ENCODE measurements at regions of chr2 and their contacts with region 1.

Region 1: GRCh38 chr2:96407041-96407918 is 71.7 kb downstream of the NCAPH start:
- DNase-seq: peak; percentile 78
- ATAC-seq: peak; percentile 90
- H3K4me3 Mint-ChIP-seq: no peak overlapping the region
- H3K27ac Mint-ChIP-seq: peak overlapping the region; percentile 94
- H3K4me1 Mint-ChIP-seq: peaks cover 30% of the 10 kb centered on the region
- H3K27me3 Mint-ChIP-seq: no peaks in the 10 kb centered on the region
- CTCF ChIP-seq: peak; percentile 74

Region 2: GRCh38 chr2:95091885-95092555 is 1315.3 kb before region 1 on chr2:
- CTCF ChIA-PET with region 1: no interaction called
- POLR2A ChIA-PET with region 1: no interaction called
- intact Hi-C with region 1: no loop called
- DNase-seq: no peak
- ATAC-seq: no peak
- H3K4me3 Mint-ChIP-seq: no peak overlapping the region
- H3K27ac Mint-ChIP-seq: no peak overlapping the region
- H3K4me1 Mint-ChIP-seq: peaks cover 27% of the 10 kb centered on the region
- H3K27me3 Mint-ChIP-seq: no peaks in the 10 kb centered on the region
- CTCF ChIP-seq: no peak

Region 3: GRCh38 chr2:96396095-96396494 is 11.2 kb before region 1 on chr2:
- CTCF ChIA-PET with region 1: interaction called, 60 read pairs
- POLR2A ChIA-PET with region 1: no interaction called
- intact Hi-C with region 1: no loop called
- DNase-seq: no peak
- ATAC-seq: no peak
- H3K4me3 Mint-ChIP-seq: no peak overlapping the region
- H3K27ac Mint-ChIP-seq: no peak overlapping the region
- H3K4me1 Mint-ChIP-seq: peaks cover 4% of the 10 kb centered on the region
- H3K27me3 Mint-ChIP-seq: no peaks in the 10 kb centered on the region
- CTCF ChIP-seq: no peak

Region 4: GRCh38 chr2:96427917-96428316 is 20.6 kb after region 1 on chr2:
- CTCF ChIA-PET with region 1: interaction called, 13 read pairs
- POLR2A ChIA-PET with region 1: interaction called, 4 read pairs
- intact Hi-C with region 1: no loop called
- DNase-seq: peak; percentile 26
- ATAC-seq: peak; percentile 94
- H3K4me3 Mint-ChIP-seq: no peak overlapping the region
- H3K27ac Mint-ChIP-seq: no peak overlapping the region
- H3K4me1 Mint-ChIP-seq: peaks cover 10% of the 10 kb centered on the region
- H3K27me3 Mint-ChIP-seq: peaks cover 10% of the 10 kb centered on the region
- CTCF ChIP-seq: no peak

Region 5: GRCh38 chr2:96470636-96471035 is 63.4 kb after region 1 on chr2:
- CTCF ChIA-PET with region 1: interaction called, 14 read pairs
- POLR2A ChIA-PET with region 1: no interaction called
- intact Hi-C with region 1: no loop called
- DNase-seq: peak; percentile 72
- ATAC-seq: peak; percentile 88
- H3K4me3 Mint-ChIP-seq: no peak overlapping the region
- H3K27ac Mint-ChIP-seq: no peak overlapping the region
- H3K4me1 Mint-ChIP-seq: peaks cover 8% of the 10 kb centered on the region
- H3K27me3 Mint-ChIP-seq: peaks cover 3% of the 10 kb centered on the region
- CTCF ChIP-seq: peak; percentile 77

Region 6: GRCh38 chr2:96485751-96486651 is 78.7 kb after region 1 on chr2:
- CTCF ChIA-PET with region 1: interaction called, 10 read pairs
- POLR2A ChIA-PET with region 1: interaction called, 4 read pairs
- intact Hi-C with region 1: no loop called
- DNase-seq: peak; percentile 93
- ATAC-seq: peak; percentile 93
- H3K4me3 Mint-ChIP-seq: peak overlapping the region; percentile 86
- H3K27ac Mint-ChIP-seq: peak overlapping the region; percentile 96
- H3K4me1 Mint-ChIP-seq: peaks cover 40% of the 10 kb centered on the region
- H3K27me3 Mint-ChIP-seq: no peaks in the 10 kb centered on the region
- CTCF ChIP-seq: no peak

Region 7: DNA sequence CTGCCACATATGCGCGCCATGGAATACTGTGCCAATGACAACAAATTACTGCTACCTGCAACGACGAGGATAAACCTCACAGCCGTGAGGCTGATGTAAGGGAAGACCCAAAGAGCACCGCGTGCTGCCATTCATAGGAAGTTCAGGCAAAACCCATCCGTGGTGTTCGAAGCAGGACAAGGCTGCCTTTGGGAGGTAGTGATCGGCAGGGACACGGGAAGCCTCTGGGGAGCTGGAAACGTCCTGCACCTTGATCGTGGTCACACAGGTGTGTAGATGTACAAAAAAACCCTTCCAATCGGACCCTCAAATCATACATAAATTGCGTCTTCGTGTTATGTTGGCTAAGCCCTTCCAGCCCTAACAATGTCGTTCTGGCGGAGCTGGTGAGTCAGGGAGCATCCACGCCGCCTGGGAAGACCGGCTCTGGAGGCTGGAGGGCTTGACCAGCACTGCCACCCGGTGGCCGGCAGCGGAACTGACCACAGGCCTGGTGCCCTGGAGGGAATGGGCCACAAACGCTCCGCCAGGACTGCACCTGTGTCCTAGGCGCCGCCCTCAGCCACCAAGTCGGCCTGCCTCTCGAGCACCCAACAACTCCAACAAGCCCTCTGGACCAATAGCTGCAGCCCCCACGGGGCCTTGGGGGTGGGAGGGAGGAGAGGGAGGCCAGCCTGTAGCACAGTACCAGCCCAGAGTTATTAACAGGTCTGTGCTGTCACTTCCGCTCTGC is 102.0 kb after region 1 on chr2:
- CTCF ChIA-PET with region 1: interaction called, 133 read pairs
- POLR2A ChIA-PET with region 1: interaction called, 3 read pairs
- intact Hi-C with region 1: loop called (anchors 5 kb)
- DNase-seq: peak; percentile 80
- ATAC-seq: peak; percentile 57
- H3K4me3 Mint-ChIP-seq: no peak overlapping the region
- H3K27ac Mint-ChIP-seq: no peak overlapping the region
- H3K4me1 Mint-ChIP-seq: peaks cover 9% of the 10 kb centered on the region
- H3K27me3 Mint-ChIP-seq: peaks cover 16% of the 10 kb centered on the region
- CTCF ChIP-seq: peak; percentile 94

Region 8: DNA sequence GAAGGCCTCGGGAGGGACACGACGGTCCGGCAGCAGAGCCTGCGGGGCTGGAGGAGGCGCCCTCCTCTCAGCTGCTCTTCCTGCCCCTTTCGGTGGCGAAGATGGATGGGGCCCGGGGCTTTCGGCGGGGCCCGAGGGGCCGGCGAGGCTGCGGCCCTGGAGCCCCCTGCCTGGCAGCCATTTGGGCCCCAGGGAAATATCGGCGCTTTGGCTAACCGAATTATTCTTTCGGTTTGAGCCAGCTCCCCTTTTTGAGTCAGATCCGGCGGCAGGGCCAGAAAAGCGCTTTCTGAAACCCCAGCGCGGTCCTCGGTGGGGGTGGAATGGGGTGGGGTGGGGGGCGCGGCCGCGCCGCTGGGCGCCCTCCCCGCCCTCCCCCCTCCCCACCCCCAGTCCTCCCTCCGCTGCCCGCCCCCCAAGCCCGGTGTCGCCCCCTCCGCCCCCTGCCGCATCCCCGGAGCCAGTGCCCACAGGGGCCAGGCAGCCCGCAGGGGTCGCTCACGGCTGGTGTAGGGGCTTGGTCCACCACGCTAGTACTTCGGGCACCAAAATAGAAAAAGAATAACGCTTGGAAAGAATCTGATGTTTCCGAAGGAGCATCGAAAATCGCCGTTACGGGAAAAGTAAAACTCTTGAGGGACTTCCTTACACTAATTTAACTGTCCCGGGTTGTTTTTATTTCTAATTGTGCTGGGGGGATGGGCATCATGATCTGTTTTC is 120.2 kb after region 1 on chr2:
- CTCF ChIA-PET with region 1: interaction called, 14 read pairs
- POLR2A ChIA-PET with region 1: no interaction called
- intact Hi-C with region 1: no loop called
- DNase-seq: peak; percentile 87
- ATAC-seq: peak; percentile 25
- H3K4me3 Mint-ChIP-seq: peak overlapping the region; percentile 70
- H3K27ac Mint-ChIP-seq: peak overlapping the region; percentile 90
- H3K4me1 Mint-ChIP-seq: peaks cover 76% of the 10 kb centered on the region
- H3K27me3 Mint-ChIP-seq: no peaks in the 10 kb centered on the region
- CTCF ChIP-seq: peak; percentile 43